IMR-90 (cell line): ENCODE measurements at regions of chr6 and their contacts with region 1.

Region 1: DNA sequence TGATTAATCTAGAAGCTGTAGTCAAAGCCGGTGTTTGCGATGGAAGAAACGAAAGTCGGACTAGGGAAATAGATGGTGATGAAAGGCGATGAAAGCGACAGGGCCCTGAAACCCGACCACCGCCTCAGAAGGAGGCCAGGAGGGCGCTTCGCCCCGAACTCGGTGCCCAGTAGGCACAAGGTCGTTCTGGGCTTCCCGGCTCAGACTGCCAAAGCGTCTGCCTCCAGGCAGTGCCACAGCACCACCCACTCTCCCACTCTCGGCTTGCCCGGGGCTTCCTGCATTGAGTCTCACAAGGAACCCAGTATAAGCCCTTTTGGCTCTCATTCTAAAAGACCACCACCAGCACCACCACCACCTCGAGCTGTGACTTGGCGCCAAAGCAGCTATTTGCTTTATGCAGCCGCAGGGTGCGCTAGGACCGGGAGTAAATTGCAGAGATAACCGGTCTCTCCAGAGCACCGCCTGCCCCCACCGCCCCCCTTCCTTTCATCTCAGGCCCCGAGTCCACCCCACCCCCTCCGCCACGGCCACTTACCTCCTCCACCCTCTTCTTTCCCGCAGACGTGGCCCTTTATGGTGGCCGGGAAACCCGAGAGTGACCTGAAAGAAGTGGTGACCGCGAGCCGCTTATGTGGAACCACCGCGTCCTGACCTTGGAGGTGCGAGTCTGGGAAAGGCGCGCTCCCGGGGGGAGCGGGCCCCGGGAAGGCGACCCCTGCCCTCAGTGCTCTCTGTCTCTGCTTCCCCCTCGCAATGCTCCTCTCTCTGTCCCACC is 2.4 kb downstream of the TCF21 start:
- DNase-seq: peak; percentile 39
- ATAC-seq: no peak
- H3K4me3 ChIP-seq: peak overlapping the region; percentile 99
- H3K27ac ChIP-seq: peak overlapping the region; percentile 97
- H3K4me1 ChIP-seq: peaks cover 13% of the 10 kb centered on the region
- H3K27me3 ChIP-seq: no peaks in the 10 kb centered on the region
- CTCF ChIP-seq: no peak
- POLR2A ChIP-seq: no peak
- RAD21 ChIP-seq: no peak

Region 2: DNA sequence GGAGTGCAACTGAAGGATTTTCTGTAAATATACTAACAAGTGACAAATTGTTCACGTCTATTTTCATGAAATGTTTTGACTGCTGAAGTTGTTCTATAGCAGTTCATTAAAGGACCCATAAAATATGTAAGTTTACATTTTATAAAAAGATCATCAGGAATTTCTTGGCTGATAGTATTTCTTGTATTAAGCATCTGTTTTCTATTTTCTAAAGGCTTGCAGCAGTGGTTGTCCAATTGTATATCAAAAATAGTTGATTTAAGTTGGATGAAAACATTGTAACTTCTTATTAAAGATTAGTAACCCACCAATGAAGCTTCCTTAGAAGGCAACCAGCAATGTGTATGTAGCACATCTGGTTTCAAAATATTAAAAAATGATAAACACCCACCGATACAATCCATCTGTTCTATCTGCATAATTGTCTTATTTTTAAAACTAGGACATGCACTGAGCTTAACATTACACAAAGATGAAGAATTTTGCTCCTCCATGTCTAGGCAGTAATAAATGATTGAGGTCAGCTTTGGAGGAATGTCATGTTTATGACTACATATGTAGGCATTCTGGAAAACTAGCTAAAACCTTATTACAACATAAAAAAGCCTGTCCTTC is 303.7 kb before region 1 on chr6:
- CTCF ChIA-PET with region 1: no interaction called
- POLR2A ChIA-PET with region 1: interaction called, 7 read pairs
- dilution Hi-C with region 1: loop called (anchors 25 kb)
- in situ Hi-C with region 1: no loop called
- intact Hi-C with region 1: no loop called
- DNase-seq: peak; percentile 87
- ATAC-seq: peak; percentile 87
- H3K4me3 ChIP-seq: no peak overlapping the region
- H3K27ac ChIP-seq: peak overlapping the region; percentile 99; the same call in 1 of the 2 replicates
- H3K4me1 ChIP-seq: peaks cover 15% of the 10 kb centered on the region
- H3K27me3 ChIP-seq: no peaks in the 10 kb centered on the region
- CTCF ChIP-seq: no peak
- POLR2A ChIP-seq: no peak
- RAD21 ChIP-seq: no peak

Region 3: GRCh38 chr6:133623065-133623464 is 268.3 kb before region 1 on chr6:
- CTCF ChIA-PET with region 1: no interaction called
- POLR2A ChIA-PET with region 1: interaction called, 10 read pairs
- dilution Hi-C with region 1: no loop called
- in situ Hi-C with region 1: loop called (anchors 25 kb)
- intact Hi-C with region 1: no loop called
- DNase-seq: peak; percentile 68
- ATAC-seq: peak; percentile 83
- H3K4me3 ChIP-seq: no peak overlapping the region
- H3K27ac ChIP-seq: peak overlapping the region; percentile 86
- H3K4me1 ChIP-seq: peaks cover 14% of the 10 kb centered on the region
- H3K27me3 ChIP-seq: no peaks in the 10 kb centered on the region
- CTCF ChIP-seq: no peak
- POLR2A ChIP-seq: no peak
- RAD21 ChIP-seq: no peak

Region 4: GRCh38 chr6:133644892-133645619 is 246.3 kb before region 1 on chr6:
- CTCF ChIA-PET with region 1: interaction called, 4 read pairs
- POLR2A ChIA-PET with region 1: interaction called, 11 read pairs
- dilution Hi-C with region 1: no loop called
- in situ Hi-C with region 1: no loop called
- intact Hi-C with region 1: loop called (anchors 5 kb)
- DNase-seq: peak; percentile 74
- ATAC-seq: peak; percentile 75
- H3K4me3 ChIP-seq: no peak overlapping the region
- H3K27ac ChIP-seq: peak overlapping the region; percentile 90
- H3K4me1 ChIP-seq: peaks cover 16% of the 10 kb centered on the region
- H3K27me3 ChIP-seq: no peaks in the 10 kb centered on the region
- CTCF ChIP-seq: no peak
- POLR2A ChIP-seq: no peak
- RAD21 ChIP-seq: no peak

Region 5: GRCh38 chr6:133837801-133838349 is 53.5 kb before region 1 on chr6:
- CTCF ChIA-PET with region 1: no interaction called
- POLR2A ChIA-PET with region 1: no interaction called
- dilution Hi-C with region 1: no loop called
- in situ Hi-C with region 1: no loop called
- intact Hi-C with region 1: loop called (anchors 5 kb)
- DNase-seq: no peak
- ATAC-seq: no peak
- H3K4me3 ChIP-seq: no peak overlapping the region
- H3K27ac ChIP-seq: no peak overlapping the region
- H3K4me1 ChIP-seq: peaks cover 8% of the 10 kb centered on the region
- H3K27me3 ChIP-seq: no peaks in the 10 kb centered on the region
- CTCF ChIP-seq: peak; percentile 30; the same call in 1 of the 2 replicates
- POLR2A ChIP-seq: no peak
- RAD21 ChIP-seq: peak; percentile 30